GM10248 (cell line): ENCODE measurements at regions of chr11 and their contacts with region 1.

Region 1: GRCh38 chr11:67345920-67346799 is 7.2 kb downstream of the POLD4 start:
- DNase-seq: no peak
- CTCF ChIP-seq: peak; percentile 66

Region 2: DNA sequence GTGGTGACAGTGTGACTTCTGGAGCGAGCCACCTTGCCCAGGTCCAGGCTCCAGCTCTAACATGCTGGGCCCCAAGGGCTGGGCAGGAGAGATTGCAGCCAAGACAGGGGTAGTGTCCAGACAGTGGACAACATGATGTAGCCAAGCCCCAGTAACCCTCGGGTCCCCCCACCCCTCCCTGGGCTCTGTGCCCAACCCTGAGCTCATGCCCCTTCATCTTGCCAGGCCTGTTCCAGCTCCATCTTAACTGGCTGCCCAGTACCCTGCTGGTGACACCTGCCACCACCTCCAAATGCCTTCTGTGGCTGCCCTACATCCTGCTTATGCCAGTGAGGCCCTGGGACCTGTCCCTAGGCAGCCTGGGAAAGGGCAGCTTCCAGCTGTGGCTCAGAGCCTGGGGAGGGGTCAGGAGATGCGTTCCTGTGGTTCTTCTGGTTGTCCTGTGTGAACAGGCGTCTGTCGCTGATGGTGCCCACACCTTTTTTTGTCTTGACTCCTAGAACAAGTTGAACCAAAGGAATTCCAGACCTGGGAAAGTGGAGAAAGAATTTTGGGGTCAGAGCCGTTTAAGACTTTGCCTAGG is 335.7 kb before region 1 on chr11:
- CTCF ChIA-PET with region 1: no interaction called
- POLR2A ChIA-PET with region 1: no interaction called
- DNase-seq: no peak
- CTCF ChIP-seq: no peak

Region 3: DNA sequence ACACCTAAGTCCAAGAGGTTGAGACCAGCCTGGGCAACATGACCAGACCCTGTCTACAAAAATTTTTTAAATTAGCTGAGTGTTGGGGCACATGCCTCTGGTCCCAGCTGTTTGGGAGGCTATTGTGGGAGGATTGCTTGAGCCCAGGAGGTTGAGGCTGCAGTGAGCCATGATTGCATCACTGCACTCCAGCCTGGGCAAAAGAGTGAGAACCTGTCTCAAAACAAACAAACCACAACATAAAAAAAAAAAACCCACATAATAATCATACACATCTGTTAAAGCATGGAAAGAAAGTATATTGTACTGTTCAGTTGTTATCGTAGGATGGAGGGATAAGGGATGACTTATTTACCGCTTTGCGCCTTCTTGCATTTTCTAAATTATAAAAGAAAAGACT is 115.8 kb before region 1 on chr11:
- CTCF ChIA-PET with region 1: no interaction called
- POLR2A ChIA-PET with region 1: no interaction called
- DNase-seq: no peak
- CTCF ChIP-seq: no peak

Region 4: GRCh38 chr11:67252831-67253239 is 93.3 kb before region 1 on chr11:
- CTCF ChIA-PET with region 1: interaction called, 15 read pairs
- POLR2A ChIA-PET with region 1: no interaction called
- DNase-seq: no peak
- CTCF ChIP-seq: peak; percentile 23

Region 5: DNA sequence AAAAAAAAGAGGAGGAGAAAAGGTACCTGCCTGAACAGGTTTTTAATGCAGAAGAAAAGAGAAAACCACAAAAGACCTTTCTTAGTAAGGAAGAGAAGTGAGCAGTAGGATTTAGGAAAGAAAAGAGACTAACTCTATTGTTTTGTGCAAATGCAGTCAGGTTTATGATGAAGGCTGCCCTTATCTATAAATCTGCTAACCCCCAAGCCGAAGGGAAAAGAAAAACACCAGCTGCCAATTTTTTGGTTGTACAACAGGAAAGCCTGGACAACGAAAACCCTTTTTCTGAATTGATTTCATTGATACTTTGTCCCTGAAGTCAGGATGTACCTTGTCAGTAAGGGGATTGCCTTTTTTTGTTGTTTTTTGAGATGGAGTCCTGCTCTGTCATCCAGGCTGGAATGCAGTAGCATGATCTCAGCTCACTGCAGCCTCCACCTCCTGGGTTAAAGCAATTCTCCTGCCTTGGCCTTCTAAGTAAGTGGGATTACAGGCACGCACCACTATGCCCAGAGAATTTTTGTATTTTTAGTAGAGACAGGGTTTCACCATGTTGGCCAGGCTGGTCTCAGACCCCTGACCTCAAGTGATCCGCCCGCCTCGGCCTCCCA is 14.0 kb before region 1 on chr11:
- CTCF ChIA-PET with region 1: interaction called, 242 read pairs
- POLR2A ChIA-PET with region 1: no interaction called
- DNase-seq: no peak
- CTCF ChIP-seq: no peak

Region 6: GRCh38 chr11:67373925-67374618 is 27.9 kb after region 1 on chr11:
- CTCF ChIA-PET with region 1: interaction called, 1,573 read pairs
- POLR2A ChIA-PET with region 1: interaction called, 3 read pairs
- DNase-seq: peak; percentile 65
- CTCF ChIP-seq: peak; percentile 48

Region 7: DNA sequence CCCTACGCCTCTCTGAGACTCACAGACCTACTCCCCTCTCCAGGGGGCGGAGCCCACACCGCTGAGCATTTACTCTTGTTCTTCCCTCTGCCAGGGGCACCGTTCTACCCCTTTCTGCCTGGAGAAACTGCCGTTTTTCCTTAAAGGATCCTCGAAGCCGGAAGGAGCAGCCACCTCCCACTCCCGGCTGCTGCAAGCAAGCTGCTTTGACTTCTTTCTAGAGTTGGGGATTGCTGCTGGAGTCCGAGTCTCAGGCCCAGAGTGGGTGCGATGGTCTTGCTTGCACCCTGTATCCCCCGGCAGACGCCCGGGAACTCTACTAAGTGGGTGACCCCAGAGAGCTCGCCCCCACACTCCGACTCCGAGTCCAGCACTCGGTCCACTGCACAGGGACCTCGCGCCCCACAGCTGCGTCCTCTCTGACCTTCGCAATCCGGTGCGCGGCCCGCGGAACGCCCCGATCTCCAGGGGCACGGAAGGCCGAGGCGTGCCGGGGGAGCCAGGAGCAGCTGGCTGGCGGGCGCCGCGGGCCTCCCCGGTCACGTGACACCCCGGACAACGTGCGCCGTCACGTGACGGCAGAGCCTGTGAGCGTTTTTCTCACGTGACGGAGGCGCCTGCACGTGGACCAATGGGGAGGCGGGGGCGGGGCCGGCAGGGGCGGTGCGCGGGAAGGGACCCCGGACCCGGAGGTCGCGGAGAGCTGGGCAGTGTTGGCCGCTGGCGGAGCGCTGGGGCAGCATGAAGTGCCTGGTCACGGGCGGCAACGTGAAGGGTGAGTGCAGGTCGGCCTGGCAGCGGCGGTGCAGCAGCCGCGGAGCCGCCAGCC is 45.4 kb after region 1 on chr11 and contains the start of gene RAD9A:
- CTCF ChIA-PET with region 1: interaction called, 1,573 read pairs
- POLR2A ChIA-PET with region 1: interaction called, 22 read pairs
- DNase-seq: peak; percentile 98
- CTCF ChIP-seq: no peak